K562 (cell line): ENCODE measurements at regions of chr7 and their contacts with region 1.

Region 1: GRCh38 chr7:45136106-45137060 is 21.2 kb upstream of the RAMP3 start:
- DNase-seq: peak; percentile 75 to 86 (median 76)
- ATAC-seq: peak; percentile 74
- H3K4me3 ChIP-seq: no peak overlapping the region
- H3K27ac ChIP-seq: no peak overlapping the region
- H3K4me1 ChIP-seq: peaks cover 5 to 15% of the 10 kb centered on the region in 2 experiments
- H3K27me3 ChIP-seq: no peaks in the 10 kb centered on the region
- CTCF ChIP-seq: peak; percentile 84 to 96 (median 87)
- EP300 ChIP-seq: 0 out of 2 replicates have a peak, but pooled peaks have one; percentile 13
- POLR2A ChIP-seq: no peak
- RAD21 ChIP-seq: peak; percentile 96

Region 2: DNA sequence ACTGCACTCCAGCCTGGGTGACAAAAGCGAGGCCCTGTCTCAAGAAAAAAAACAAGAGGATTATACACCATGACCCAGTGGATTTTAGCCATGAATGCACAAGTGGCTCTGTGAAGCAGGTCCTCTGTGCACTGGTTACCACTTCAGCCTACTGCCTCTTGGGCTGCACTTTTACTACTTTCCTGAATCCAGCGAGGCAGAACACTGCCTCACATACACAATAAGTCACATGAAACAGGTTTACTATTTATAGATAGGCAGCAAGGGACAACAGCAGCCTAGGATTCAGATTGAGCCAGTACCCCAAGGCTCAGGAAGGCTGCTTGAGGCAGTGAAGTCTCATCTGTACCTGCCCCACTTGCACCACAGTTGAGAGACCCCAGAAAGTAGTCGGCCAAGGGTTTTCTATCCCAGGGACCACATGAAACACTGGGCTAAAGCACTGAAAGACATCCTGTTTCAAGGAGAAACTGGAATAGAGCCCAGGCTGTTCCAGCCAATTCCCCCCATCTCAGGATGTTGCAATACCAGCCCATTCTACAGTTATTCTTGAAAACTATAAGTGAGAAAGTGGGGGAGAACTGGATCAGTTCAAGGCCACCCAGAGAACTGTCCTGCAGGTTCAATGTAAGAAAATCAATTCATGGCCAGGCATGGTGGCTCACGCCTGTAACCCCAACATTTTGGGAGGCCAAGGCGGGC is 540.3 kb before region 1 on chr7:
- CTCF ChIA-PET with region 1: no interaction called
- POLR2A ChIA-PET with region 1: no interaction called
- in situ Hi-C with region 1: loop called (anchors 10 kb)
- intact Hi-C with region 1: no loop called
- DNase-seq: no peak
- ATAC-seq: peak; percentile 79
- H3K4me3 ChIP-seq: no peak overlapping the region
- H3K27ac ChIP-seq: no peak overlapping the region
- H3K4me1 ChIP-seq: no peaks in the 10 kb centered on the region
- H3K27me3 ChIP-seq: 0 out of 5 replicates have a peak, but pooled peaks cover 0 to 2% of the 10 kb centered on the region in 2 experiments
- CTCF ChIP-seq: 0 out of 6 replicates have a peak, but pooled peaks of 1 of the 3 experiments have one; percentile 1
- EP300 ChIP-seq: no peak
- POLR2A ChIP-seq: no peak
- RAD21 ChIP-seq: no peak

Region 3: GRCh38 chr7:44858161-44858560 is 278.2 kb before region 1 on chr7:
- CTCF ChIA-PET with region 1: interaction called, 4 read pairs
- POLR2A ChIA-PET with region 1: interaction called, 3 read pairs
- in situ Hi-C with region 1: no loop called
- intact Hi-C with region 1: loop called (anchors 10 kb)
- DNase-seq: no peak
- ATAC-seq: no peak
- H3K4me3 ChIP-seq: no peak overlapping the region
- H3K27ac ChIP-seq: no peak overlapping the region
- H3K4me1 ChIP-seq: peaks cover 0 to 4% of the 10 kb centered on the region in 2 experiments; a peak in 2 of 5 replicates
- H3K27me3 ChIP-seq: no peaks in the 10 kb centered on the region
- CTCF ChIP-seq: no peak; a peak in 1 of 6 replicates
- EP300 ChIP-seq: no peak
- POLR2A ChIP-seq: no peak
- RAD21 ChIP-seq: no peak

Region 4: GRCh38 chr7:44967571-44968446 is 168.6 kb before region 1 on chr7:
- CTCF ChIA-PET with region 1: interaction called, 27 read pairs
- POLR2A ChIA-PET with region 1: interaction called, 17 read pairs
- in situ Hi-C with region 1: loop called (anchors 5 kb)
- intact Hi-C with region 1: loop called (anchors 1 kb)
- DNase-seq: peak; percentile 61 to 66 (median 63)
- ATAC-seq: peak; percentile 76
- H3K4me3 ChIP-seq: no peak overlapping the region
- H3K27ac ChIP-seq: no peak overlapping the region
- H3K4me1 ChIP-seq: peaks cover 0 to 45% of the 10 kb centered on the region in 2 experiments; a peak in 3 of 5 replicates
- H3K27me3 ChIP-seq: no peaks in the 10 kb centered on the region
- CTCF ChIP-seq: peak; percentile 66 to 72 (median 71)
- EP300 ChIP-seq: no peak
- POLR2A ChIP-seq: no peak
- RAD21 ChIP-seq: peak; percentile 60 to 77

Region 5: GRCh38 chr7:45073786-45074527 is 62.4 kb before region 1 on chr7:
- CTCF ChIA-PET with region 1: interaction called, 17 read pairs
- POLR2A ChIA-PET with region 1: no interaction called
- in situ Hi-C with region 1: no loop called
- intact Hi-C with region 1: loop called (anchors 1 kb)
- DNase-seq: no peak
- ATAC-seq: no peak
- H3K4me3 ChIP-seq: no peak overlapping the region
- H3K27ac ChIP-seq: no peak overlapping the region
- H3K4me1 ChIP-seq: peaks cover 0 to 18% of the 10 kb centered on the region in 2 experiments; a peak in 1 of 5 replicates
- H3K27me3 ChIP-seq: no peaks in the 10 kb centered on the region
- CTCF ChIP-seq: no peak
- EP300 ChIP-seq: no peak
- POLR2A ChIP-seq: no peak
- RAD21 ChIP-seq: no peak

Region 6: GRCh38 chr7:45278763-45279398 is 142.5 kb after region 1 on chr7:
- CTCF ChIA-PET with region 1: no interaction called
- POLR2A ChIA-PET with region 1: no interaction called
- in situ Hi-C with region 1: no loop called
- intact Hi-C with region 1: no loop called
- DNase-seq: no peak
- ATAC-seq: no peak
- H3K4me3 ChIP-seq: no peak overlapping the region
- H3K27ac ChIP-seq: no peak overlapping the region
- H3K4me1 ChIP-seq: no peaks in the 10 kb centered on the region
- H3K27me3 ChIP-seq: peaks cover 0 to 2% of the 10 kb centered on the region in 2 experiments; a peak in 2 of 5 replicates
- CTCF ChIP-seq: no peak
- EP300 ChIP-seq: no peak
- POLR2A ChIP-seq: no peak
- RAD21 ChIP-seq: no peak

Region 7: DNA sequence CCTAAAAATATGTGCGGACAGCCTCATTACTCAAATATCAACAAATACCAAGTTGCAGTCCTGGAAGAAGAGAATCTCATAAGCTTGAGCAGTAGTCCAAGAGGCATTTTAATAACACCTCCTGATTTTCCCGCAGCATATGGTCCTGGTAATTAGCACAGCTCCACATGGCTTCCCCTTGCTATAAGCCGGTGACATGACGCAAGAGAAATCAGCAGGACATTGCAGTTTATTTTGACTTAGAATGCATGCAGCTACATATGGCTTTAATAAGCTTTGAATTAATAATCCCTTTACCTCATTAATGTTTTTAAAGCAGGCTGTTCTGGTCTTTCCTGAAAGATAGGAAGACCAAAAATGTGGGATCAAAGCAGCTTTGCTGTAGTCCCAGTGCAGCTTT is 158.8 kb after region 1 on chr7:
- CTCF ChIA-PET with region 1: no interaction called
- POLR2A ChIA-PET with region 1: no interaction called
- in situ Hi-C with region 1: no loop called
- intact Hi-C with region 1: no loop called
- DNase-seq: no peak
- ATAC-seq: no peak
- H3K4me3 ChIP-seq: no peak overlapping the region
- H3K27ac ChIP-seq: no peak overlapping the region
- H3K4me1 ChIP-seq: no peaks in the 10 kb centered on the region
- H3K27me3 ChIP-seq: peaks cover 0 to 16% of the 10 kb centered on the region in 2 experiments; a peak in 2 of 5 replicates
- CTCF ChIP-seq: no peak
- EP300 ChIP-seq: no peak
- POLR2A ChIP-seq: no peak
- RAD21 ChIP-seq: no peak